Ascending aorta (tissue), 2 donors: ENCODE measurements at regions of chr19 and their contacts with region 1.

Region 1: DNA sequence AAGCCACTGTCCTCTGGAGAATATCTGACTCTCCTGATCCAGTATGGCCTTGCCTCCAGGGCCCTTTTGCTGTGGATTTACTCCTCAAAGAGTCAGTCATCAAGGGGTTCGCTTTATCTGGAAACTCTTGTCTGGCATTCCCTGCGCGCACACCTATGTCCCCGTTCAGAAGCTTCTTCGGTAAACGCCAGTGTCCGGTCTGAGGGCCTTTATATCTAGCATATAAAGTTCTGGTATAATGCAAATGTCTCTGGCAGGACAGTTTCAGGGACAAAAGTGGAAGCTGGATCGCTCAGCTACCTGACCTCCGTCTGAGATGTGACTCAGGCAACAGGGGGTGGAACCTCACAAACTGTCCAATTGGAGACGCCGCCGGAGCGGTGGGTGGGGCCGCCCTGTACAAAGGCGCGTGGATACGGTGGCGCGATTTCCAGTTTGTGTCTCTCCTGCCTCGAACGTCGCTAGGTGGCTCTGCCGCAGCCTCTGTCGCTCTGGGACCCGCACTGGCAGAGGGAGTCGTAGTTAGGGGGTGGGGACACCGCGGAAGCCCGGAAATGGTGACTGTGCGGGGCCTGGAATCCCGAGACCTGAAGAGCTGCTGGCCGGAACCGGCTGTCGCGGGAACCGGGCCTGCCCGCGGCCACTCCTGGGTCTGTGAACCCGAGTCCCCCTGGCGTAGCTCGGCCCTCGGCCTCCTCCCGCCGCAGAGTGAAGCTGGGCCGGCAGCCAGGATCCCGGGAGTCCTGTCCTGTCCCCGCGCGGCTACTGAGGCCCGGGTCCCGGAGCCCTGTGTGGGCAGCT is 10.6 kb upstream of the ZNF709 start:
- DNase-seq: peak; percentile 88 to 98
- H3K4me3 ChIP-seq: peak overlapping the region; percentile 72 to 74
- H3K27ac ChIP-seq: peak overlapping the region; percentile 88 to 96
- H3K4me1 ChIP-seq: peaks cover 0 to 3% of the 10 kb centered on the region in 2 donors
- H3K27me3 ChIP-seq: no peaks in the 10 kb centered on the region
- CTCF ChIP-seq: peak in 2 of 3 experiments; percentile 34 to 55

Region 2: GRCh38 chr19:12035220-12036153 is 459.7 kb before region 1 on chr19 and contains the start of gene ZNF433:
- intact Hi-C with region 1: loop called (anchors 10 kb)
- DNase-seq: peak; percentile 75 to 97
- H3K4me3 ChIP-seq: peak within 1 kb of the TSS; percentile 68 to 74
- H3K27ac ChIP-seq: peak within 1 kb of the TSS; percentile 74 to 84
- H3K4me1 ChIP-seq: peaks cover 0 to 5% of the 10 kb centered on the region in 2 donors
- H3K27me3 ChIP-seq: no peaks in the 10 kb centered on the region
- CTCF ChIP-seq: no peak
- total RNA-seq, gene ZNF433: not detected

Region 3: DNA sequence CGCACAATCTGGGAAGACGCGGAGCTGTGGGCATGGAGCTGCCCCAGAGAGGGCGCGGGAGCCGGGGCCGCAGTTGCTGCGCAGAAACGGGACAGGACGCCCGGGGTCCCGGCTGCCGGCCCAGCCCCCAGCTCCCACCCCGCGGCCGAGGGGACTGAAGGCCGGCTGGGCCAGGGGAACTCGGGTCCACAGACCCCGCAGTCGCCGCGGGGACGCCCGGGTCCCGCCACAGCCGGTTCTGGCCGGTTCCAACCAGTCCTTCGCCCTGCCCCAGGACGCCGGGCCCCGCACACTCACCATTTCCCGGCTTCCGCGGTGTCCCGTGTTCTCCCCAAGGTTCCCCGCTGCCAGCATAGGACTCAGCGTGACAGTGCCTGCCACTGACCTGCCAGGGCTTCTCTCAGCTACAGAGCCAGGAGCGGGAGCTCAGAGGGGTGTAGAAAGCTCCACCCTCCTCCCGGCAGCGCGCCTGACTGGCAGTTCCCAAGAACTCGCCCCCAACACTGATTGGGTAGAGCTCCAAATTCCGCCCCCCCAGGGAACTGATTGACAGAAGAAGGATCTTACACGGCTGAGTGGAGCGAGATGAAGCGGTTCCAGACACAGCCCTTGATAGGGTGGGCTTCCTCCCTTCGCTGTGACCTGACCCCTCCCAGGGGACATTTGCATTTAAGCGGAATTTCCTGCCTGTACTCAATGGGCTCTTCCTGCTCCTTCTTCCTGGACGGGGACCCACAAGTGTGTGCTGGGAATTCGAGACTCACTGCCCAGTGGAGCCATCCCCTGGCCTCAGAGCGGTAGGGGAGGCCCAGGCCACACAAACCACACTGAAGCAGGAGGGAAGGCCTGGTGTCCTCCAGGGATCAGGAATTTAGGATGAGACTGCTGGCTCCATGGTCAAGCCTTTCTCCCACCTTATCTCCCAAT is 129.7 kb before region 1 on chr19 and contains the start of gene ZNF442:
- intact Hi-C with region 1: loop called (anchors 2 kb)
- DNase-seq: peak; percentile 84 to 98
- H3K4me3 ChIP-seq: peak within 1 kb of the TSS; percentile 79 to 91
- H3K27ac ChIP-seq: peak within 1 kb of the TSS; percentile 90 to 94
- H3K4me1 ChIP-seq: peaks cover 0 to 3% of the 10 kb centered on the region in 2 donors
- H3K27me3 ChIP-seq: no peaks in the 10 kb centered on the region
- CTCF ChIP-seq: peak; percentile 63 to 75 (median 65)
- total RNA-seq, gene ZNF442: 0.21 TPM

Region 4: GRCh38 chr19:12484371-12485051 is 10.7 kb before region 1 on chr19 and contains the start of gene ZNF709:
- intact Hi-C with region 1: loop called (anchors 1 kb)
- DNase-seq: peak; percentile 63 to 94
- H3K4me3 ChIP-seq: peak within 1 kb of the TSS; percentile 86 to 98
- H3K27ac ChIP-seq: peak within 1 kb of the TSS; percentile 74 to 76
- H3K4me1 ChIP-seq: peaks cover 0 to 15% of the 10 kb centered on the region in 2 donors
- H3K27me3 ChIP-seq: no peaks in the 10 kb centered on the region
- CTCF ChIP-seq: no peak
- total RNA-seq, gene ZNF709: 3.4 TPM

Region 5: DNA sequence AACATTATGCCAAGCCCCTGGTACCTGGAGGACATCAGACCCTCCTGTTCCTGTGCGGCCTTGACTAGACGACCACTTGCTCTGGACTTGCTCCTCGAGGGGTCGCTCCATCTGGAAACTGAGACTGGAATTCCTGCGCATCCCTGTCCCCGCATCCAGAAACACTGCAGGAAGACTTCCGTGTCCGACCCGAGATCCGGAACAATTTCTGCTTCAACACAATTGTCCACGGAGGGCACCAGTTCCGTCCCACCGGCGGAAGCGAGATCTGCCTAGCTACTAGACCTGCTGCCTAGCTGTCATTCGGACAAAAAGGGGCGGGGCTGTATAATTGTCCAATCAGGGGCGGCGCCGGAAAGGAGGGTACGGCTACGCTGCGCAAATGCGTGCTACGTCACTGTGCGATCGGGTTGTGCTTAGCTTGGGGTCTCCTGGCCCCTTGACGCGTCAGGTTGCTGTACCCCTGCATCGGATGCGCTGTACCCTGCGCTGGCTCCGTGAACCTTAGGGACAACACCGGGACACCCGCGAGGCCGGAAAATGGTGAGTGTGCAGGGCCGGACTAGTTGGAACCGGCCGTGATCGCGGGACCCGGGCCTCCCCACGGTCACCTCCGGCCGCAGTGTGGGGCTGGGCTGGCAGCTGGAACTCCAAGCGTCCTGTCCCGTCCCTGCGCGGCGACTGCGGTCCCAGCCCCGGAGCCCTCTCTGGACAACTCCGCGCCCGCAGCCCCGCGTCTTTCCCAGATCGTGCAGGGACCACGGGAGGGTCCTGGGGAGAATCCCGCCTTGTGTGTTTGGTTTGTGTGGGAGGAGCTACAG is 115.5 kb after region 1 on chr19 and contains the starts of genes ZNF490 and ZNF791:
- intact Hi-C with region 1: loop called (anchors 10 kb)
- DNase-seq: peak; percentile 95 to 99
- H3K4me3 ChIP-seq: peak within 1 kb of the TSS; percentile 74 to 81
- H3K27ac ChIP-seq: peak within 1 kb of the TSS; percentile 96 to 100
- H3K4me1 ChIP-seq: peaks cover 0 to 28% of the 10 kb centered on the region in 2 donors
- H3K27me3 ChIP-seq: no peaks in the 10 kb centered on the region
- CTCF ChIP-seq: no peak
- total RNA-seq, gene ZNF490: 27.8 TPM
- total RNA-seq, gene ZNF791: 6.9 TPM